Activated CD4-positive, alpha-beta memory T cell treated with anti-CD3 and anti-CD28 coated beads for 36 hours (primary cell): ENCODE measurements at regions of chr2 and their contacts with region 1.

Region 1: DNA sequence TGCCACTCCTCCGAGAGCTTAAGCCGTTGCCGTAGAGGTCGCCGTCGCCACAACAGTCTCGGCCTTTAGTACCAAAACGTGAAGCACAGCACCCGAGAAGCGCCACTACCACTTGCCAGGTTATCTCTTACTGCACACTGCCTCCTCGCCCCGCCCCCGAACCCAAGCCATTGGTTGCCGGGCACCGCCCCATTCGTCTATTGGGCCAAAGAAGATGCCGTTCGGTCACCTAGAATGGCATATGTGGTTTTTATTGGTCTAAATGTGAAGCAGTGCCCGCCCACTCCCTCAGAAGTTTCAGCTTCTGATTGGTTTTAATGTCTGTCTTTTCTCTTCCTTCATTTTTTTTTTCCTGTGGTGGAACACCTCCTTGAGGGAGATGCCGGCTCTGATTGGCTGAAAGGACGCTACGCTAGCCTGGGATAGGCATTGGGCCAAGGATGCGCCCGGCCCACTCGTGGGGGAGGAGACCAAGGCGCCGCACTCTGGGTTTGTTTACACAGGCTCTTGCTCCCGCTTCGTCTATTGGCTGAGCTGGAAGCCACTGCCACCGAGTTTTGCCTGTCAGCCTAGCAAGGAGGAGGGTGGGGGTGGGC is at the start of gene PAIP2B:
- DNase-seq: peak; percentile 99
- H3K4me3 Mint-ChIP-seq: peak within 1 kb of the TSS; percentile 97
- H3K27ac Mint-ChIP-seq: peak within 1 kb of the TSS; percentile 82
- H3K4me1 Mint-ChIP-seq: peaks cover 10% of the 10 kb centered on the region
- H3K27me3 Mint-ChIP-seq: peaks cover 2% of the 10 kb centered on the region
- total RNA-seq, gene PAIP2B: 2.2 TPM

Region 2: DNA sequence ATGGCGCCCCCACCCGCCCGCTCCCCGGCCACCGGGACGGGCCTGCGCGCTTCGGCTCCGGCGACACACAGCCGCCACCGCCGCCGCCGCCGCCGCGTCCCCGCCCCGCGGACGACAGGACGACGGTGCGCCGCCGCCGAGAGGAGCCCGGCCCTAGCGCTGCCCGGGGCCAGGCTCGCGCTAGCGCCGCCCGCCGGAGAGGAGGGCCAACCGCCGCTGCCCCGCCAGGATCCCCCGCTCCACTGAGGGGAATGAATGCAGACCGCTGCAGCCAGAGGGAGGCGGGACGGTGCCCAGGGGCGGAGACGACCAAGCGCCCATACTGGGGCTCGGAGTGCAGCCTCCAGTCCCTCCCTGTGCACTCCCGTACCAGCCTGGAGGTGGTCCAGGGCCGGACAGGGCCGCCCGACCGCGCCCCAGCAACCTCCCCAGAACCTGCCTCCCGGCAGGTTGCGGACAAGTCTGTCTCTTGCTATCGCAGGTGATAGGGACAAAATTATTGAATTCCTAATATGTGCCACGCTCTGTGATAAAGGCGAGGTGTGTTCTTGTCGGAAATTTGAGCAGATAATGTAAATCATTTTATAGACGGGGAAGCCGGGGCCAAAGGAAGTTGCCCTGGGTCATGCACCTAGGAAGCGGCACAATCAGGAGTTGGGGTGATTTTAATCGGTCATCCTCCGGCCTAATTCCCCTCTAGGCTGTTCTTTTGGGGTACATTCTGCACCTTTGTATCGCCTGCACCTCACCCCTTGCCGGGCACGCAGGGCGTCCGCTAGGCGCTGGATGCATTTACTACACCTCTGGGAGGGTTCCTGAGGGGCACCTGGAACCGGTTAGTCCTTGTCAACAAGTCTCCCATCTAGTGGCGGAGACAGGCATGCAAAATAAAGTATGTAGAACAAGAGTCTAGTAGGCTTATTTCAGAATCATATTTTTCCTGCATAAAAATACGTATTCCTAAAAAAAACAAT is 232.0 kb before region 1 on chr2 and contains the start of gene TEX261:
- CTCF ChIA-PET with region 1: no interaction called
- POLR2A ChIA-PET with region 1: no interaction called
- intact Hi-C with region 1: loop called (anchors 10 kb)
- DNase-seq: peak; percentile 94
- H3K4me3 Mint-ChIP-seq: peak within 1 kb of the TSS; percentile 93
- H3K27ac Mint-ChIP-seq: peak within 1 kb of the TSS; percentile 91
- H3K4me1 Mint-ChIP-seq: peaks cover 31% of the 10 kb centered on the region
- H3K27me3 Mint-ChIP-seq: no peaks in the 10 kb centered on the region
- total RNA-seq, gene TEX261: 29.0 to 29.9 TPM

Region 3: GRCh38 chr2:71018625-71019024 is 208.4 kb before region 1 on chr2:
- CTCF ChIA-PET with region 1: no interaction called
- POLR2A ChIA-PET with region 1: no interaction called
- intact Hi-C with region 1: loop called (anchors 1 kb)
- DNase-seq: no peak
- H3K4me3 Mint-ChIP-seq: no peak overlapping the region
- H3K27ac Mint-ChIP-seq: no peak overlapping the region
- H3K4me1 Mint-ChIP-seq: peaks cover 7% of the 10 kb centered on the region
- H3K27me3 Mint-ChIP-seq: no peaks in the 10 kb centered on the region

Region 4: GRCh38 chr2:71130113-71130904 is 96.8 kb before region 1 on chr2 and contains the starts of genes MCEE and MPHOSPH10:
- CTCF ChIA-PET with region 1: no interaction called
- POLR2A ChIA-PET with region 1: interaction called, 4 read pairs
- intact Hi-C with region 1: loop called (anchors 1 kb)
- DNase-seq: peak; percentile 94
- H3K4me3 Mint-ChIP-seq: no peak within 1 kb of the TSS
- H3K27ac Mint-ChIP-seq: no peak within 1 kb of the TSS
- H3K4me1 Mint-ChIP-seq: peaks cover 11% of the 10 kb centered on the region
- H3K27me3 Mint-ChIP-seq: no peaks in the 10 kb centered on the region
- total RNA-seq, gene MCEE: 12.0 to 16.1 TPM
- total RNA-seq, gene MPHOSPH10: 37.1 to 38.5 TPM

Region 5: GRCh38 chr2:71166812-71167211 is 60.3 kb before region 1 on chr2:
- CTCF ChIA-PET with region 1: no interaction called
- POLR2A ChIA-PET with region 1: no interaction called
- intact Hi-C with region 1: no loop called
- DNase-seq: peak; percentile 25
- H3K4me3 Mint-ChIP-seq: no peak overlapping the region
- H3K27ac Mint-ChIP-seq: no peak overlapping the region
- H3K4me1 Mint-ChIP-seq: peaks cover 3% of the 10 kb centered on the region
- H3K27me3 Mint-ChIP-seq: peaks cover 3% of the 10 kb centered on the region

Region 6: GRCh38 chr2:71276311-71277146 is 49.5 kb after region 1 on chr2:
- CTCF ChIA-PET with region 1: interaction called, 5 read pairs
- POLR2A ChIA-PET with region 1: no interaction called
- intact Hi-C with region 1: loop called (anchors 1 kb)
- DNase-seq: peak; percentile 91
- H3K4me3 Mint-ChIP-seq: peak overlapping the region; percentile 72
- H3K27ac Mint-ChIP-seq: no peak overlapping the region
- H3K4me1 Mint-ChIP-seq: peaks cover 18% of the 10 kb centered on the region
- H3K27me3 Mint-ChIP-seq: peaks cover 70% of the 10 kb centered on the region

Region 7: DNA sequence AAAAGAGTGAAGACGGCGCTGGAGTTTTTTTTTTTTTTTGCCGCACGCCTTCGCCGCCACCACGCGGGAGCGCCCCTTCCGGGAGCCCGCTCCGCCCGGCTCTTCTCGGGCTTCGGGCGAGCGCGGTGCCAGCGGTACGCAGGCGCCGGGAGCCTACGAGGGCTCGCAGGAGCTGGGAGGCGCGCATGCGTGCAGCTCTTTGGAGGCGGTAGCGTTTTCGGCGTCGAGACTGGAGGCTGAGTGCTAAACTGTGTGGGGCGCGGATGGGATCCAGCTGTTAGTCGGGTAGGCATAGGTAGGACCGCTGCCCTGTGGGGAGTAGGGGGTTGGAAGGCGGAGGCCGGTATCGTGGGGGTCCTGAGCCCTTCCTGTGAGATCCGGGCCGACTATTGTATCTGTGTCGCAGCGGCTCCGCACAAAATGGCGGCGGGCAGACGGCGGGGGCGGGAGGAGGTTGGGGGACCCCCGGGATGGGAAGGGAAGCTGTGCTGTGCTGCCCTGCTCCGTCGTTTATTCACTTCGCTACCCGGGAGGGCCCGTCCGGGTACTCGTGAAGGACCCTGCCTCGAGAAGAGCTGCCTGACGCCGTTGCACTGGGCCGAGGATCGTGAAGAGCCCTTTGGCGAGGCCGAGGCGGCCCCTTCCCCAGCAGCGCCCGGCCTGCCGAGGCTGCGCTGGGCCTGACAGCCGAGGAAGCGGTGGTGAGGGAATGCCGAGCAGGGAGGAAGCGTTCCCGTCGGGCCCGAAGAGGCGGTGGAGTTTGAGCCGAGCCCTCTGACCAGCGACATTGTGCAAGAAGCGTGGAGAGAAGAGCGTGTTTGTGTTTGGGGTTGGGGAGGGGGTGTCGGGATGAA is 104.7 kb after region 1 on chr2 and contains the start of gene ZNF638:
- CTCF ChIA-PET with region 1: interaction called, 9 read pairs
- POLR2A ChIA-PET with region 1: interaction called, 5 read pairs
- intact Hi-C with region 1: loop called (anchors 1 kb)
- DNase-seq: peak; percentile 94
- H3K4me3 Mint-ChIP-seq: peak within 1 kb of the TSS; percentile 94
- H3K27ac Mint-ChIP-seq: peak within 1 kb of the TSS; percentile 93
- H3K4me1 Mint-ChIP-seq: peaks cover 31% of the 10 kb centered on the region
- H3K27me3 Mint-ChIP-seq: peaks cover 2% of the 10 kb centered on the region
- total RNA-seq, gene ZNF638: 74.2 to 87.4 TPM